ENCODE measurements at regions of chr6 and their contacts with region 1.

Region 1: DNA sequence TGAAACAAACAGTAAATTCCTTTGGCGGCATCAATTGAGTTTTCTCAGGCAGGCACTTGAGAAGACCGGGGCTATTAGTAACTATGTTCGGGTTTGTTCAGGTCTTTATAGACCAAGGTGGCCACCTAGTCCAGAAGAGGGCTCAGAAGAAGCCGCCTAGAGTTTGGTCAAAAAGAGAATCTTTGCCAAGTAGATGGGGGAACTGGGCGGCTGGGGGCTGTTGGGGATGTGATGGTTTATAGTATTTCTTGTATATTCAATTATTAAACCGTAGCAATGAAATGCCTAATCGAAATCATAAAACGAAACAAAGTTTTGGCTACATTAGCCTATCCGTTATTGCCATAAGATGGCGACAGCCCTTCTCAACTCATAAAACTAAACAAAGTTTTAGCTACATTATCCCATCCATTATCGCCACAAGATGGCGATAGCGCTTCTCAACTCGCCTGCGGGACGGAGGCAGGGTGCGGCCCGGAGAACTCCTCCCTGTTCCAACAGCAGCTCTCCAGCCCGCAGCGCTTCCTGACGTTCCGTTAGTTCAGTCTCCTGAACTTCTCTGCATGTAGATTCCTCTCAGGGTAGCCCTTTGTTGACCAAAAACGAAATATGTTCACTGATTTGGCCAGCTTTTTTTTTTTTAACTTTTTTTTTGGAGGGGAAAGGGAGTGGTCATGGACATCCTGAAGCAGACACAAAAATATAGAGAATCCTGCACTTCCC is 120.5 kb upstream of the PRSS16 start:
- DNase-seq: peak; percentile 78
- H3K4me3 Mint-ChIP-seq: peak overlapping the region; percentile 84
- H3K27ac Mint-ChIP-seq: peak overlapping the region; percentile 91
- H3K4me1 Mint-ChIP-seq: peaks cover 39% of the 10 kb centered on the region
- H3K27me3 Mint-ChIP-seq: no peaks in the 10 kb centered on the region

Region 2: GRCh38 chr6:27007020-27007419 is 120.0 kb before region 1 on chr6:
- intact Hi-C with region 1: no loop called
- DNase-seq: no peak
- H3K4me3 Mint-ChIP-seq: no peak overlapping the region
- H3K27ac Mint-ChIP-seq: no peak overlapping the region
- H3K4me1 Mint-ChIP-seq: no peaks in the 10 kb centered on the region
- H3K27me3 Mint-ChIP-seq: peaks cover 3% of the 10 kb centered on the region

Region 3: DNA sequence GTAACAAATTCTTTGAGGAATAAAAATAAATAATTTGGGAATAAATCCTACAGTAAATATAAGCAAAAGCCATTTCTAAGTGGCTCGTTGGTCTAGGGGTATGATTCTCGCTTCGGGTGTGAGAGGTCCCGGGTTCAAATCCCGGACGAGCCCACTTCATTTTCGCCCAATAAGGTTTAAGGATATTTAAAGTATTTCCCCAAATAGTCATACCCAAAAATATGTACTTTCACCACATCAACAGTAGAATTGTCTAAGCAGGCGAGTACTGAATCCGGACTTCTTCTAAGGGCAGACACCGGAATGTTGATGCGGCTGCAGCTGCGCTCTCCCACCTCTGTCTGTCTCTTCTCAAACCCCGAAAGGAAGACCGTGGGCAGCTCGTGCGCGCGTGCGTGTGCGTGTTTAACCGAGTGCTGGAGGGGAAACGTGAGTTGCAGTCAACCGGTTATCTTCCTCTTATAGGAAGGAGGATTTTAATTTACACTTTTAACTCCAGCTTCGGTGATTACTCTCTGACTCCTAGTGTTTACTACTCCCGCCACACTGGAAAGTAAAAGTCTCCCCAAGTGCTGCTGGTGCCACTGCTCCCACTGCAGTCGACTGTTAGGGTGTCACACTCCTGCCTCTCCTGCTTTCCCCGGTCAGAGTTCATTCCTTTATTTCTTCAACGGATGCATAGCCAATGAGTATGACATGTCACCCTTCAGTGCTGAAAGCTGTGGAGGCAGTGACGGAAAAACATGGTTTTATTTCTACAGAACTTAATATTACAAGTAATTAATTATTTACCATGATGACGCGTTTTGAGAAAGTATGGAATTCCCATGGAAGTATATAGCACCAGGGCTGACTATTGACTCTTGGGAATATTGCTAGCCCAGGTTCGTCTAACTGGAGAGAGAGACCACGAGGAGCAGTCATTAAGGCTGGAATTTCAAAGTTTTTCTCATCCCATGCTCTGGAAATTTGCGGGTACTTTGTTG is 35.0 kb before region 1 on chr6:
- intact Hi-C with region 1: no loop called
- DNase-seq: no peak
- H3K4me3 Mint-ChIP-seq: peak overlapping the region; percentile 73
- H3K27ac Mint-ChIP-seq: no peak overlapping the region
- H3K4me1 Mint-ChIP-seq: peaks cover 14% of the 10 kb centered on the region
- H3K27me3 Mint-ChIP-seq: peaks cover 61% of the 10 kb centered on the region

Region 4: DNA sequence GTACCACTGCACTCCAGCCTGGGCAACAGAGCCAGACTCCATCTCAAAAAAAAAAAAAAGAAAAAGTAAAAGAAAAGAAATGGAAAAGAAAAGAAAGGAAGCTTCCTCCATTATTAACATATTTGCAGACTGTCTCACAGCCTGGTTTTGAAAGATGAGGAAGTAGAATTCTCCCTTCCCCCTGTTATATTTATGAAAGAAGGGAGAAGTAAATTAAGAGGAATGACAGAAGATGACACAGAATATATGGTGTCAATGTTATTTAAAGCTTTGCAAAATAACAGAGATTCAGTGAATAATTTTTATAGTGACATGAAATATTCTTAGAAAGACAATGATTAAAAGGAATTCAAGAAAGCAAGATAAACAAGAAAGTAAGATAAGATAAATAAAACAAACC is 36.9 kb after region 1 on chr6:
- intact Hi-C with region 1: no loop called
- DNase-seq: no peak
- H3K4me3 Mint-ChIP-seq: no peak overlapping the region
- H3K27ac Mint-ChIP-seq: no peak overlapping the region
- H3K4me1 Mint-ChIP-seq: peaks cover 9% of the 10 kb centered on the region
- H3K27me3 Mint-ChIP-seq: peaks cover 6% of the 10 kb centered on the region

Region 5: DNA sequence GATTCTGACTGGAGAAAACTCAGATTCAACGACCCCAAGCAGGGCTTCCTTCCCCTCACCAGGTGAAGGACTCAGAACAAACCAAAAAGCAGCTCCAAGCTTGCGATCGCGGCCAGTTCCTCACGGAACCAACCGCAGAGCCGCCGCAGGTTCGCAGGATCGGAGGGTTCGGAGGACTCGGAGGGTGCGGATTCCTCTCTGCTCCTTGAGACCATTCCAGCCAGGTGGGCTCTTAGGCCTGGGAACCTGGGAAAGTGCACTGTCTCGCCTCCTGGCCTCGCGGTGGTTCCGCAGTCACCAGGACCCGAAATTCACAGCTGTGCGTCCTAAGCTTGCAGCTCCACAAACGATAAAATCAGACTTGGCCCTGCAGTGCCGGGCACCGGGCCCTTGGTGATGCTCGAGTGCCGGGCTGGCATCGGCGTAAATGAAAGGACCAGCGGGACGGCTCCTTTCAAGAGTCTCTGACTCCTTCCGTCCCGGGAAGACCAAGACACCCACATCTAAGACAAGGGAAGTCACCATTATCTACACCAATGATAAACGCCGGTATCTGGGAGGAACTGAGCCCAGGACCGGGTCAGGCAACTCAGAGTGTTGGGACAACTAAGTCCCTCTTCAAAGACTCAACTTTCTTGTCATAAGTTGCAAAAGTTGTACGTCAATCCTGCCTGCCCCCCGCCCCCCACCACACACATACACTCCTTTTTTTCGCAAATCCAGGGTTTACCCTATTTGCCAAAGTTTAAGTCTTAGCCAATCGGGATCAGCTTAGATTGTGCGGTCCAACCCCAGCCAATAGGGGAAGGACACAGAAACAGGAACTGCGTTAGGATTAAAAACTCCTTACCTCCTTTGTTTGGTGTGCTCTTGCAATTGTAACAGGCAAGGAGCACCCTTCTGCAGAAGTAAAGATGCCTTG is 50.8 kb after region 1 on chr6:
- intact Hi-C with region 1: loop called (anchors 1 kb)
- DNase-seq: peak; percentile 65
- H3K4me3 Mint-ChIP-seq: peak overlapping the region; percentile 90
- H3K27ac Mint-ChIP-seq: peak overlapping the region; percentile 87
- H3K4me1 Mint-ChIP-seq: peaks cover 11% of the 10 kb centered on the region
- H3K27me3 Mint-ChIP-seq: peaks cover 37% of the 10 kb centered on the region

Region 6: DNA sequence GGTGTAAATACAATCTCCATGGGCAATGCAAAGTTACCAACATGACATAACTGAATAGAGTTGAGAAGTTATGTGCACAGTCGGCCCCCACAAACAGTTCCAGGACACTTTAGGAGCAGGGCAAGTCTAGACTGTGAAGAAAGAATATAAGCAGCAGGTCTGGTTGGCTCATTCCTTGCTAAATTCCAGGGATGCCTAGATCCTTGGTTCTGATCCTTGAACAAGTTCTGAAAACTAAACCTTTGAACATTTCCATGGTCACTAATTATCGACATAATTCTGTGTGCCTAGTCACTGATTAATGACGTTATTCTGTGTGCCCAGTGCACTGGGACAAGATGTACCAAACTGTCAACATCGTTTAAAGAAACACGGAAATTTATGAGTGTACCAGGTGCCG is 333.7 kb after region 1 on chr6:
- intact Hi-C with region 1: no loop called
- DNase-seq: no peak
- H3K4me3 Mint-ChIP-seq: no peak overlapping the region
- H3K27ac Mint-ChIP-seq: no peak overlapping the region
- H3K4me1 Mint-ChIP-seq: no peaks in the 10 kb centered on the region
- H3K27me3 Mint-ChIP-seq: no peaks in the 10 kb centered on the region